Adrenal gland (tissue), 19 donors: ENCODE measurements at regions of chr4 and their contacts with region 1.

Region 1: DNA sequence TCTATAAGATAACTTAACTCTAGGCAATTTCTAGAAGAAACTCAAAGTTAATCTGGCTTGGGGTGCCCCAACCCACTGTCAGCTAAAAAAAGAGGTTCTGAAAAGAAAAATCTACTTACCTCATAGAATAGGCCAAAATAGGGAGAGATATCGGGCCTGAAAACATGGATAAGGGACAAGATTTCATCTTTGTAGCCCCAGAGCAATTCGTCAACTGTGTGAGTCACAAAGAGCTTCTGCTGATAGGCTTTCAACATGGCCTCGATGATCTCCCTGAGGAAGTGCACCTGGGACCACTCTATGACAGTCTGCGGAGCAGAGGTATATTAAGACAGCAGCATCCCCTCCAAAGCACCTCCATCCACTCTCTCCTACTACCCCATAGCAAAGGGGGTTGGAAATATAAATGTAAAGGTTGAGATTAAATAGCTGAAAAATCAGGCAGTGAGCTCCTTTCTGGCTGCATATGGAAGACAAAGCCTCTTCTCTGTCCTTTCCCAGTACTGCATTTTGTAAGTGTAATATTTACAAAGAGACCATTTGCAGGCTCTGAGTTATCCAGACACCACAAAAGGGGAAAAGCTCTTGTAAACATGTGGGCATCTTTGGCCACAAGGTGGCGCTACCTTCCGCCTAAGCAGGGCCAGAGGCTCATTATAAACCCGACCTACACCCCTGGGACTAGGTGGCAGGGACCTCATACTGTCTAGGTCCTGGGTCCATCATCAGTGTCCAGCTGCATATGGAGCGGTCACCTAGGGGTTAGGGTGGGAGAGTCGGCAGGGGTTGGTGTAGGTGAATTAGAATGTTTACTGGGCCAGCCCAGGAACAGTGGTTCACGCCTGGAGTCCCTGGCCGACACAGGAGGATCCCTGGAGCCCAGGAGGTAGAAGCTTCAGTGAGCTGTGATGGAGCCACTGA is 31.5 kb upstream of the NUP54 start:
- DNase-seq: peak; percentile 79 to 96 (median 89)
- H3K4me3 ChIP-seq: no peak overlapping the region
- H3K27ac ChIP-seq: no peak overlapping the region
- H3K4me1 ChIP-seq: peaks cover 0 to 17% of the 10 kb centered on the region in 2 donors
- H3K27me3 ChIP-seq: no peaks in the 10 kb centered on the region
- CTCF ChIP-seq: peak; percentile 81 to 96 (median 86)
- POLR2A ChIP-seq: no peak

Region 2: GRCh38 chr4:76074468-76074867 is 105.2 kb before region 1 on chr4 and contains the start of gene ART3:
- intact Hi-C with region 1: no loop called
- DNase-seq: no peak
- H3K4me3 ChIP-seq: no peak within 1 kb of the TSS
- H3K27ac ChIP-seq: no peak within 1 kb of the TSS
- H3K4me1 ChIP-seq: no peaks in the 10 kb centered on the region
- H3K27me3 ChIP-seq: no peaks in the 10 kb centered on the region
- CTCF ChIP-seq: no peak
- POLR2A ChIP-seq: no peak
- total RNA-seq, gene ART3: 0.70 to 1.1 TPM in 2 of 9 donors, not detected in the others

Region 3: GRCh38 chr4:76251441-76252270 is 72.0 kb after region 1 on chr4 and contains the start of gene FAM47E:
- intact Hi-C with region 1: loop called in 1 of 2 experiments (anchors 10 kb)
- DNase-seq: peak; percentile 79 to 92 (median 83)
- H3K4me3 ChIP-seq: peak within 1 kb of the TSS; percentile 22 to 64 (median 44)
- H3K27ac ChIP-seq: peak within 1 kb of the TSS in 1 of 5 donors; percentile 59
- H3K4me1 ChIP-seq: peaks cover 4 to 7% of the 10 kb centered on the region in 2 donors
- H3K27me3 ChIP-seq: no peaks in the 10 kb centered on the region
- CTCF ChIP-seq: peak in 2 of 6 experiments; percentile 37 to 39
- POLR2A ChIP-seq: peak; percentile 18 to 19
- total RNA-seq, gene FAM47E: 2.8 to 8.0 (median 4.8) TPM

Region 4: DNA sequence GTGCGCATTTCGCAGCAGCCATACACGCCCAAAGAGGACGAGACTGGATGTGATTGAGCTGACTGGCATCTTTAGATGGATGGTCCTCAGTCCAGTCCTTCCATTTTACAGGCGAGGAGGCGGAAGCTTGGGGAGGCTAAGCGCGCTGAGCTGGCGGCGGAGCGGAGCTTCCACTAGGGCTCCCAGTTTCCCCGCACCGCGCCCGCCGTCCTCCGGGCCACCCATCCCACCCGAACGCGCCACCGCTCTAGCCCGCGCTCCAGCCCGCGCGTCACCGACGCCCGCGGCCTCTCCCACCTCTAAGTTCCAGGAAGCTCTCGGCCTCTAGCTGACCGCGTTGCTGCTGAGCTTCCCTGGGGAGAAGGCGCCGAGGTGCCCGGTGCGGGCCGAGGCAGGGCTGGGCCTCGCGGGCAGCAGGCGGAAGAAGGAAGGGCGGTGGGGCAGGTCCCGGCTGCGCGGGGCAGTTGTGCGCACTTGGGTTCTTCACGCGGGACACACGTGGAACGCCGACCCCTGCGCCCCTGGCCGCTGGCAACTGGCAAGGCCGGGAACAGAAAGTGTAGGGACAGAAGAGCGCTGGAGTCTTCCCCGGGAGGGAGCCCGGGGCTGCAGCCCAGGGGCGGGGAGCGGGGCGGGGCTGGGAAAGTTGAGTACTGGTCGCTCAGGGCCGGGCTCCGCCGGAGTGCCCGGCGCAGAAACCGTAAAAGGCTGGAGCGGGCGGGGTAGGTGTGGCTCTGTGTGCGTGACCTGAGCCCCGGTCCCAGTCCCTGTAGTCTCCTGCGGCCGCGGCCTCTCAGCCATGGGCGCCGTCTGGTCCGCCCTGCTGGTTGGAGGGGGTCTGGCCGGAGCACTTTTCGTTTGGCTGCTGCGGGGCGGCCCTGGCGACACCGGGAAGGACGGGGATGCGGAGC is 126.6 kb after region 1 on chr4 and contains the start of gene STBD1:
- intact Hi-C with region 1: loop called in 1 of 2 experiments (anchors 10 kb)
- DNase-seq: peak; percentile 76 to 90 (median 78)
- H3K4me3 ChIP-seq: peak within 1 kb of the TSS; percentile 62 to 87 (median 74)
- H3K27ac ChIP-seq: peak within 1 kb of the TSS; percentile 57 to 90 (median 84)
- H3K4me1 ChIP-seq: peaks cover 4 to 28% of the 10 kb centered on the region in 2 donors
- H3K27me3 ChIP-seq: no peaks in the 10 kb centered on the region
- CTCF ChIP-seq: peak in 3 of 6 experiments; percentile 5 to 18 (median 5)
- POLR2A ChIP-seq: peak in 1 of 2 donors; percentile 63
- total RNA-seq, gene STBD1: 1.5 to 6.3 (median 3.6) TPM

Region 5: DNA sequence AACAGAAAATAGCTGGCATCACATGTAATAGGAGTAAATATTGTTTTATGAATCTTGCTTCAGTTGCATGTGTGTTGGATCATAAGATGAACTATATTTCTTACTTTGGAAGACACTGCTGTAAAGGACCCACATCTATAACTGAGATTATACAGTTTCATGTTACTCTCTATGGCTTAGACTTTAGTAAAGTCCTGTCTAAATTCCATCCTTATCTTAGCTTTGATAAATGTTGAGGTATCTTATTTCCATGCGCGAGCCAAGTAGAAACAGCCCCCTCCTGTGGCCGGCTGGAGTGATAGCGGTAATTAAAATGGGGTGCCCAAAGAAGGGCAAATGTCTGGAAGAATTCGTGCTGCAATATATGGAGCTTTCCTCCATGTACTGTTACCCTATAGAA is 198.3 kb after region 1 on chr4:
- intact Hi-C with region 1: loop called in 1 of 2 experiments (anchors 5 kb)
- DNase-seq: peak in 6 of 7 donors; percentile 43 to 63 (median 56)
- H3K4me3 ChIP-seq: no peak overlapping the region
- H3K27ac ChIP-seq: no peak overlapping the region
- H3K4me1 ChIP-seq: peaks cover 0 to 7% of the 10 kb centered on the region in 2 donors
- H3K27me3 ChIP-seq: no peaks in the 10 kb centered on the region
- CTCF ChIP-seq: peak; percentile 28 to 68 (median 58)
- POLR2A ChIP-seq: no peak

Region 6: DNA sequence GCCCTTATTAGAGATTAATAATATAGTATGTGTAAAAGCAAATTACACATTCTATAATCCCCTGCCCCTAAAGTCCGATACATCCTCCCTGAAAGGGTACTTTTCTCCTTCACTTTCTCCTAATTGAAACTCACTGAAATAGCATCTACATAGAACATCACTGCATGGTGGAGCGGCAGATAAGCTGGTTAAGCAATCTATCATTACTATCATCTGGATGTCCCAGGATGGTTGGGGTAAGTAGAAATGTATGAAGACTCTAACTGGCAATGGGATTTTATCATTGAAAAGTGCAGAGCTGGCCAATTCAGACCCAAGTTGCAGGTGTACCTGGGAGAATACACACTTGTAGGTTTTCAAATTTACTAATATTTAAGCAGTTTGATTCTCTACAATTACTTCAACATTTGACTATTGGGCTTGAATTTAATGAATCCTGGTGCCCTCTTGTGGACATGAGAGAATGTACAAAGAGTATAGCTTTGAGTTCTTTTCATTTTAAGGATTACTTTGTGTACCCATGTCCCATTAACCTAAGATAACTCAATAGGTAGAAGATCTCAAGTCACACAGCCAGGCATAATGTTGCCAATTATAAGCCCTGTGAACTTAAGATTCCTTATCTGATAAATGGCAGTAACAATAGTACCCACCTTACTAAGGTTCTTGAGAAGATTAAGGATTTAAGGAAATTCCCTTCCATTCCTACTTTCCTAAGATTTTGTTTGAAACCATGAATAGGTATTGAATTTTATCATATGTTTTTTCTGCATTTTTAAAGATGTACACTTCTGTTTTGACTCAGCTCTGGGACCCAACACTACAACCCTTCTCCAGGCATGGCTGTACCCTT is 325.2 kb after region 1 on chr4:
- intact Hi-C with region 1: loop called in 1 of 2 experiments (anchors 10 kb)
- DNase-seq: peak in 1 of 7 donors; percentile 8
- H3K4me3 ChIP-seq: no peak overlapping the region
- H3K27ac ChIP-seq: no peak overlapping the region
- H3K4me1 ChIP-seq: no peaks in the 10 kb centered on the region
- H3K27me3 ChIP-seq: no peaks in the 10 kb centered on the region
- CTCF ChIP-seq: peak; percentile 47 to 74 (median 59)
- POLR2A ChIP-seq: no peak